GM12878 (cell line): ENCODE measurements at regions of chr20 and their contacts with region 1.

Region 1: DNA sequence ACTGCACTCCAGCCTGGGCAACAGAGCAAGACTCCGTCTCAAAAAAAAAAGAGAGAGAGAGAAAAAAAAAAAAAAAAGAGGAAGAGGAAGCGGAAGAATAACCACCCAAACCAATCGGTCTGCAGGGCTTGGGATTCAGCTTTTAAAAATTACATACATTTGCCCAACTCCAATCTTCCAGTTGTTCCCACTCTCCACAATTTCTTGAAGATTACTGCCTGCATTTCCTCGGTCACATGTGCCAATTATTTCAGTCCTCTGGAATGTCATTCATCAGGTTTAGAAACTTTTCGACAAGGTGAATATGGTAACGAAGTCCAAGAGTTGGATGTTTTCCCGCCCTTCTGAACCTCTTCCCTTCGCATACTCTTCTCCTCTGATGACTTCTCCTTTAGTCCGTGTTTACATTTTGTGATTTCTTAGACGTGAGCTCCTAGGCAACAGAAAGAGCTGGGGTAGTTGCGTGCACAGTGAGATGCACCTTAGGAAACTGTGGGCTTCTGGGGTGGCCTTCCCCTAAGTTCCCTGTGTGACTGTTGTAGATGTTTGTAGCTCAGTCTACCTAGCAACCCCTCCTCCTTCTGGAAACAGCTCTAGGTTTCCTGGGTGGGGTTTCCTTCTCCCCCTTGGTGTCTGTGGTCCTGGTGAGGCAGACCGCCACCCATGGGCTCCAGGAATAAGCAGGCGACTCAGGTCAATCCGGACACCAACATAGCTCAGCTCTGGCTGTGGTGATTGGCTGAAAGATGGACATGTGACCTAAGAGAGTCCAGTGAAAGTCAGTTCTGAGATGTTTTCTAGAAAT is 62.9 kb upstream of the NCOA3 start:
- DNase-seq: peak; percentile 75
- ATAC-seq: peak; percentile 75
- H3K4me3 ChIP-seq: peak overlapping the region; percentile 39; the same call in 1 of the 2 replicates
- H3K27ac ChIP-seq: peak overlapping the region; percentile 91
- H3K4me1 ChIP-seq: peaks cover 19% of the 10 kb centered on the region
- H3K27me3 ChIP-seq: no peaks in the 10 kb centered on the region
- CTCF ChIP-seq: no peak
- EP300 ChIP-seq: peak; percentile 32 to 78; a peak in 3 of 4 replicates
- POLR2A ChIP-seq: no peak; the same call in 1 of the 2 replicates
- RAD21 ChIP-seq: no peak

Region 2: DNA sequence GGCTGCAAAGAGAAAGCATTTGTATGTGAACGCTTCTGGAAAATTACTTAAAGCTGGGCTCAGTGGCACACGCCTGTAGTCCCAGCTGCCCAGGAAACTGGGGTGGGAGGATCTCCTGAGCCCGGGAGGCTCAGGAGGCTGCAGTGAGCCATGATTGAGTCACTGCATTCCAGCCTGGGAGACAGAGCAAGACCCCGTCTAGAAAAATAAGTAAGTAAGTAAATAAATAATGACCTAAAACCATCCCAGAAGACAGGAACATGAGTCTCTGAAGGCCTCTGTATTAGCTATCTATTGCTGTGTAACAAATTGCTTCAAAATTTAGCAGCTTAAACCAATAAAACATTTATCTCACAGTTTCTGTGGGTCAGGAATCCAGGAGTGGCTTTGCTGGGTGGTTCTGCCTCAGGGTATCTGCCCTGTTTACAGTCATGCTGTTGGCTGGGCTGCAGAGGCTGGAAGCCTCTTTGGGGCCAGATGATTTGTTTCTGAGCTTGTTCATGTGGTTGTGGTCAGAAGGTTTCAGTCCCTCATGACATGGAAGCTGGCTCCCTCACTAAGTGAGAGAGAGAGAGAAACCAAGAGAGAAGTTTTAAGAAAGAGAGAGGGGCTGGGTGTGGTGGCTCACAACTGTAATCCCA is 14.5 kb after region 1 on chr20:
- CTCF ChIA-PET with region 1: interaction called, 7 read pairs
- POLR2A ChIA-PET with region 1: interaction called, 15 read pairs
- RAD21 ChIA-PET with region 1: interaction called, 20 read pairs
- SMC1A ChIA-PET with region 1: interaction called, 74 read pairs
- in situ Hi-C with region 1: no loop called
- intact Hi-C with region 1: no loop called
- DNase-seq: peak; percentile 92
- ATAC-seq: peak; percentile 98
- H3K4me3 ChIP-seq: peak overlapping the region; percentile 36; the same call in 1 of the 2 replicates
- H3K27ac ChIP-seq: peak overlapping the region; percentile 87
- H3K4me1 ChIP-seq: peaks cover 31% of the 10 kb centered on the region
- H3K27me3 ChIP-seq: no peaks in the 10 kb centered on the region
- CTCF ChIP-seq: no peak
- EP300 ChIP-seq: peak; percentile 27 to 28; a peak in 2 of 4 replicates
- POLR2A ChIP-seq: peak; percentile 27; the same call in 1 of the 2 replicates
- RAD21 ChIP-seq: 0 out of 2 replicates have a peak, but pooled peaks have one; percentile 14

Region 3: GRCh38 chr20:47515843-47516242 is 77.1 kb after region 1 on chr20:
- CTCF ChIA-PET with region 1: no interaction called
- POLR2A ChIA-PET with region 1: no interaction called
- RAD21 ChIA-PET with region 1: no interaction called
- SMC1A ChIA-PET with region 1: no interaction called
- in situ Hi-C with region 1: no loop called
- intact Hi-C with region 1: no loop called
- DNase-seq: no peak
- ATAC-seq: no peak; the same call in 2 of the 3 replicates
- H3K4me3 ChIP-seq: no peak overlapping the region
- H3K27ac ChIP-seq: no peak overlapping the region
- H3K4me1 ChIP-seq: no peaks in the 10 kb centered on the region
- H3K27me3 ChIP-seq: no peaks in the 10 kb centered on the region
- CTCF ChIP-seq: no peak
- EP300 ChIP-seq: no peak
- POLR2A ChIP-seq: no peak
- RAD21 ChIP-seq: no peak